Mucosa of descending colon (tissue), 3 donors: ENCODE measurements at regions of chr3 and their contacts with region 1.

Region 1: DNA sequence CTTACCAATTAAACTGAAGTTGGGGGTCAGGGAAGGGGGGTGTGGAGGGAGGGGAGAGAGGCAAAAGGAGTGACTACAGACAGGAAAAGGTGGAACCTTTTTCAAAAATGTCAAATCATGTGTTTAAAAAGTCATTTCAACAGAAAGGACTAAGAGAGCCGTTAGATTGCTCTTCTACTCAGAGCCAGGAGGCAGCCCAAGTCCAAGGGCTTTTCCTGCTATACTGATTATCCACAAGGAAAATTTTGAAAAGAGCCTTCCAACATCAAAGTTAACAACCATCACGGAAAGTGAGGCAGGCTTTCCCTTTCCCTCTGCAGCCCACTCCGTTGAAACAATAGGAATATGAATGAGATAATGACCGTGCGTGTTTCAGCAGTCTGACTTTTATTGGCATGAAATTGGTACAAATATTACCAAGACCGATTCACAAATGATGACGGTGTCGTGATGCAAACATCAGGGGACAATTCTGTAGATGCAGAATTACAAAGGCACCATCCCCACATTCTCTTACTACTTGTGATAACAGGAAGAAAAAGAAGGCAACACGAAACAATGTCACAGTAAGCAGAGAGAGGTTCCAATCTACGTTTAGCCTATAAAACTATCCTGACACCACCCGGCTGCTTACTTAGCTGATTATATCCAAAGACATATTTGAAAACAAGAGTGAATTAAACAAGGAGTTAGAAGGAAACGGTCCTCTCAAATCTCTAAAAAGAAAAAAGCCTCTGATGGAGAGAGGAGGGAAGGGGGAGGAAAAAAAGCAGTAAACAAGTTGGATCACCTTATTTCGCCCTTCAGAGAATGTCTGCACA is 453.7 kb downstream of the FOXP1 start:
- DNase-seq: no peak
- ATAC-seq: peak; percentile 6
- H3K4me3 ChIP-seq: peak overlapping the region; percentile 22
- H3K4me1 ChIP-seq: peaks cover 57% of the 10 kb centered on the region
- CTCF ChIP-seq: no peak

Region 2: DNA sequence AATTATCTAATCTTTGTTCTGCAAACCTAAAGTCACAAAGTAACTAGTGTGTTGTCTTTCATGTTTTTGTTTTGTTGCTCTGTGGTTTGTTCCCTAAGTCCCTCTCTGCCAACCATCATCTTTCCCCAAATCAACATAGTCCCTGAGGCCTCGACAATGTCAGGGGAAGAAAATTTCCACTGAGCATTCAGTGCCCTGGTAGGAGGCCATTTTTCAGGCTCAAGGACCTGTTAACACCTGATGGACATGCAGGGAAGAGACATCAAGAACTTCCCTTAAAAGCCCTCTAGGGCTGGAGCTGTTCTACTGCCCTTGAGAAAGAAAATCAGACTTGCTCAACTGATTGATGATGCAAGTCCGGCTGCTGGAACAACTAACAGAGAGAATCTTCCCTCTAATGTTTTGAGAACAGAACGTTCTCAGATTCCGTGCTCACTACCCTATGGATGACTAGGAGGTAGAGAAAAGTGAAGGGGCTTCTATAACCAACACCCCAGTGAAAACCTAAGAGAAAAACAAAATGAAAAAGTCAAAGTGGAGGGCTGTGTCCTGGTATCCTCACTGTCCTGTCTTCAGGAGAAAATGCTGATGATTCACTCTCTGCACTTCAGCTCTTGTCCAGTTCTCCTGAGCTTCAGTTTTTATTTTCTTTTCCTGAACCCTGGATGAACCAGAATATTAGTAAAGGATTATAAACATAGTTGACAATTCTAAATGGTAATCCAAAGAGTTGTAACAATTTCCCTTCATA is 80.6 kb after region 1 on chr3:
- intact Hi-C with region 1: no loop called
- DNase-seq: peak in 1 of 3 donors; percentile 18
- ATAC-seq: peak; percentile 7
- H3K4me3 ChIP-seq: no peak overlapping the region
- H3K4me1 ChIP-seq: peaks cover 14% of the 10 kb centered on the region
- CTCF ChIP-seq: no peak

Region 3: GRCh38 chr3:71305231-71306206 is 175.7 kb after region 1 on chr3:
- intact Hi-C with region 1: loop called in 1 of 2 experiments (anchors 10 kb)
- DNase-seq: peak in 2 of 3 donors; percentile 29 to 37
- ATAC-seq: peak; percentile 61
- H3K4me3 ChIP-seq: no peak overlapping the region
- H3K4me1 ChIP-seq: peaks cover 7% of the 10 kb centered on the region
- CTCF ChIP-seq: no peak

Region 4: DNA sequence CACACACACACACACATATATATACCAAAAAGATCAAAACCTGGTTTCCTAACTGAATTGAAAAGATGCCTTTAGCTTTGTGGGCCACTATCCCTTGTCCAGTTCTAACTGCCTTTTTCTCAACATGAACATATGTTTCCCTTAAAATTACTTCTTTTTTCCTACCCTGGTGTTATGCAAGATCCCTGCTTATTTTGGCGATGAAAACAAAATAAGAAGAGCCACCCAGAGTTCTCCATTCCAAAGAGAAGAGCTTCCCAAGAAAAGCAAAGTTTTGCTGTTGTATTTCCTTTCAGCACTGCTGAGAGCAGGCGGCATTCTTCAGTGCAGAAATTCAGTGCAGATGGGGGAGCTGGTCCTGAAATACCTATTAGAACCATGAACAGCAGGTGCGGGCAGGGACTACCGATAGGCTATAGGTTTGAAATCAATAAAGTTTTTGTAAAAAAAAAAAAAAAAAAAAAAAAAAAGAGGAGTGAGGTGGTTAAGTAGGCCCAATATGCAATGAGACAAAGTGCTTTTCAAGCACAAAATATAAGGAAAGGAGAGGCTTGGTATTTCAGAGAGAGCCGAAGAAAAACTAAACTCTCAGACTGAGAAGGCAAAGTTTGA is 215.7 kb after region 1 on chr3:
- intact Hi-C with region 1: no loop called
- DNase-seq: no peak
- ATAC-seq: no peak
- H3K4me3 ChIP-seq: no peak overlapping the region
- H3K4me1 ChIP-seq: no peaks in the 10 kb centered on the region
- CTCF ChIP-seq: no peak